HEK293 (cell line): ENCODE measurements at regions of chr1 and their contacts with region 1.

Region 1: GRCh38 chr1:77533660-77534305 is 148.7 kb downstream of the ZZZ3 start:
- H3K4me3 ChIP-seq: no peak overlapping the region
- H3K27ac ChIP-seq: no peak overlapping the region
- H3K4me1 ChIP-seq: no peaks in the 10 kb centered on the region
- CTCF ChIP-seq: peak; percentile 23; the same call in 1 of the 2 replicates

Region 2: GRCh38 chr1:77514921-77515776 is 18.6 kb before region 1 on chr1:
- CTCF ChIA-PET with region 1: interaction called, 11 read pairs
- POLR2A ChIA-PET with region 1: no interaction called
- H3K4me3 ChIP-seq: no peak overlapping the region
- H3K27ac ChIP-seq: no peak overlapping the region
- H3K4me1 ChIP-seq: no peaks in the 10 kb centered on the region
- CTCF ChIP-seq: peak; percentile 33

Region 3: GRCh38 chr1:77545970-77546369 is 12.2 kb after region 1 on chr1:
- CTCF ChIA-PET with region 1: interaction called, 17 read pairs
- POLR2A ChIA-PET with region 1: no interaction called
- H3K4me3 ChIP-seq: no peak overlapping the region
- H3K27ac ChIP-seq: no peak overlapping the region
- H3K4me1 ChIP-seq: no peaks in the 10 kb centered on the region
- CTCF ChIP-seq: no peak

Region 4: GRCh38 chr1:77986810-77987209 is 453.0 kb after region 1 on chr1:
- CTCF ChIA-PET with region 1: no interaction called
- POLR2A ChIA-PET with region 1: no interaction called
- H3K4me3 ChIP-seq: no peak overlapping the region
- H3K27ac ChIP-seq: no peak overlapping the region
- H3K4me1 ChIP-seq: no peaks in the 10 kb centered on the region; the same call in 1 of the 2 replicates
- CTCF ChIP-seq: no peak